A549 (cell line): ENCODE measurements at regions of chr19 and their contacts with region 1.

Region 1: GRCh38 chr19:56403764-56404704 is at the start of gene ZNF583:
- DNase-seq: peak; percentile 85 to 92
- ATAC-seq: peak; percentile 91 to 98
- H3K4me3 ChIP-seq: peak within 1 kb of the TSS; percentile 65
- H3K27ac ChIP-seq: peak within 1 kb of the TSS; percentile 90 to 94
- H3K4me1 ChIP-seq: no peaks in the 10 kb centered on the region
- CTCF ChIP-seq: no peak
- EP300 ChIP-seq: no peak
- POLR2A ChIP-seq: peak; percentile 45
- RAD21 ChIP-seq: no peak
- polyA plus RNA-seq, gene ZNF583: 3.4 and 4.8 TPM in 2 replicates

Region 2: GRCh38 chr19:56393119-56394012 is 10.7 kb before region 1 on chr19 and contains the start of gene ZNF582:
- CTCF ChIA-PET with region 1: interaction called, 18 read pairs
- POLR2A ChIA-PET with region 1: no interaction called
- DNase-seq: peak; percentile 90 to 97
- ATAC-seq: peak; percentile 96 to 99
- H3K4me3 ChIP-seq: peak within 1 kb of the TSS; percentile 46
- H3K27ac ChIP-seq: peak within 1 kb of the TSS; percentile 71 to 89
- H3K4me1 ChIP-seq: no peaks in the 10 kb centered on the region
- CTCF ChIP-seq: peak; percentile 42
- EP300 ChIP-seq: no peak
- POLR2A ChIP-seq: peak; percentile 8; the same call in 1 of the 2 replicates
- RAD21 ChIP-seq: peak; percentile 23 to 44; a peak in 3 of 5 replicates
- polyA plus RNA-seq, gene ZNF582: 3.2 TPM in 2 replicates